HepG2 (cell line): ENCODE measurements at regions of chr1 and their contacts with region 1.

Region 1: DNA sequence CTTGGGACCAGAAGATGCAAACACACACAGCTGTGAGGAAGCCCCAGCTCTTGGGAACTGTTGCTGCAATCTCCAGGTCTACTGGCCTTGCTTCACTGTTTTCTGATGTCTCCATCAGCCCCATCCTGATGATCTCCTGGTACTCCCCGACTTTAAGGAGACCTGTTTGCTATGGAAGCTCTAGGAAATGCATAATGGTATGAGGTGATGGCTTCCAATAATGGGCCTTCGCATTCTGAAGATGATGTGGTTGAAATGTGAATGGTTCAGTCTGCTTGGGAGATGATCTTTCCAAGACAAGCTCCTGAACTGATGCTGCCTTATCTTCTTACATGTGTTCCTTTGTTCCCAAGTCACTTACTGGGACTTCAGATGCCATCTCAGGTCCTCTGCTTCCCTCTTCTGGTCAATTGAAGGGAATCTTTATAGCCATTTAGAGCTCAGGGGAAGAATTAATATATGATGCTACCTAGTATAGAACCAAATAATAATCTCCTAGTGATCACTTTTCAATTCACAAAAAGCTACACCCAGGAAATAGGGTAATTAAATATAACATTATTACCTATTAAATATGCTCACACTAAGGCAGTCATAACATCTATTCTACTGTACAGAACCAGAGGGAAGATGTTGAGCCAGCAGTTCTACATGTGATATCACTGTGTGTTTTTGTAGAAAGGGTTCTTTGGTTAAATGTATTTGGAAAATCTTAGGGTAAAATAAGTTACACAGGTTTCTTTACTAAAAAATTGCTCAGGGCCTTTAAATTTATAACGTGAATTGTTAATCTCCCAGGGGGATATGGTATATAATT is 73.9 kb upstream of the VTCN1 start:
- DNase-seq: peak; percentile 52
- ATAC-seq: peak; percentile 68
- H3K4me3 ChIP-seq: no peak overlapping the region
- H3K27ac ChIP-seq: no peak overlapping the region
- H3K4me1 ChIP-seq: no peaks in the 10 kb centered on the region
- H3K27me3 ChIP-seq: no peaks in the 10 kb centered on the region; a peak in 1 of 5 replicates
- CTCF ChIP-seq: peak; percentile 64
- EP300 ChIP-seq: no peak
- POLR2A ChIP-seq: no peak
- RAD21 ChIP-seq: no peak

Region 2: DNA sequence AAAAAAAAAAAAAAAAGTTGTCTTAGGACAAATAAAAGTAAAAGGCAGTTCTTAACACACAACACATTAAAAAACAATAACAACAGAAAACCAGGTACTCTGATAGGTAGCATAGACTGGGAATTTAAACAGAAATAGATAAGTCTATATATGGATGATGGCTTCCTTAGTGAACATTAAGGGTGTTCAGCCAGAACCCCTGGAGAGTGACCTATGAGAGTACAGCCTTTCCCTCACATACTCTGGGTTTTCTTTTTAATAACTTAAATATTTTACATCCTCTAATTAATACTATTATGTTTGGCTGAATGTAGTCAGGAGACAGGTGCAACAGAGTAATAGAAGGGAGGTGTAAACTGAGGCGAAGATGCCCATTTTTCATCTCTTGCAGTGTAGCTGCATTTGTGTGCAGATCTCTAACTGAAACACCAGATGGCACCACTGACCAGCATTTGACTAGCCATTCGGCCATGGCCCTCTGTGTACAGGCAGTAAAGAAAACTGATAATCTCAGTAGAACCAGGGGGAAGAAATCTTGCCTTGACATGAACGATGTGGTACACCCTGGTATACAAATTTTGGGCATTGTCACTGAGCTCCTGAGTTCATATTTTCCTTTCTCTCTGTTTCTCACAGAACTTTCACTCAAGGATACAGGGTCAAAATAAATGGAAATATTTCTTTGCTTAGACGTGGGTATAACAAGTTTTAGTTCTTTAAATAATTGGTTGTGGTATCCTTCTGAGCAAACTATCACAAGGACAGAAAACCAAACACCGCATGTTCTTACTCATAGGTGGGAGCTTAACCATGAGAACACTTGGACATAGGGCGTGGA is 216.9 kb before region 1 on chr1:
- CTCF ChIA-PET with region 1: interaction called, 21 read pairs
- POLR2A ChIA-PET with region 1: no interaction called
- in situ Hi-C with region 1: loop called (anchors 5 kb)
- intact Hi-C with region 1: loop called (anchors 1 kb)
- DNase-seq: peak; percentile 34
- ATAC-seq: peak; percentile 94
- H3K4me3 ChIP-seq: no peak overlapping the region
- H3K27ac ChIP-seq: no peak overlapping the region
- H3K4me1 ChIP-seq: no peaks in the 10 kb centered on the region
- H3K27me3 ChIP-seq: no peaks in the 10 kb centered on the region
- CTCF ChIP-seq: peak; percentile 88
- EP300 ChIP-seq: no peak
- POLR2A ChIP-seq: no peak
- RAD21 ChIP-seq: peak; percentile 65; the same call in 1 of the 2 replicates

Region 3: DNA sequence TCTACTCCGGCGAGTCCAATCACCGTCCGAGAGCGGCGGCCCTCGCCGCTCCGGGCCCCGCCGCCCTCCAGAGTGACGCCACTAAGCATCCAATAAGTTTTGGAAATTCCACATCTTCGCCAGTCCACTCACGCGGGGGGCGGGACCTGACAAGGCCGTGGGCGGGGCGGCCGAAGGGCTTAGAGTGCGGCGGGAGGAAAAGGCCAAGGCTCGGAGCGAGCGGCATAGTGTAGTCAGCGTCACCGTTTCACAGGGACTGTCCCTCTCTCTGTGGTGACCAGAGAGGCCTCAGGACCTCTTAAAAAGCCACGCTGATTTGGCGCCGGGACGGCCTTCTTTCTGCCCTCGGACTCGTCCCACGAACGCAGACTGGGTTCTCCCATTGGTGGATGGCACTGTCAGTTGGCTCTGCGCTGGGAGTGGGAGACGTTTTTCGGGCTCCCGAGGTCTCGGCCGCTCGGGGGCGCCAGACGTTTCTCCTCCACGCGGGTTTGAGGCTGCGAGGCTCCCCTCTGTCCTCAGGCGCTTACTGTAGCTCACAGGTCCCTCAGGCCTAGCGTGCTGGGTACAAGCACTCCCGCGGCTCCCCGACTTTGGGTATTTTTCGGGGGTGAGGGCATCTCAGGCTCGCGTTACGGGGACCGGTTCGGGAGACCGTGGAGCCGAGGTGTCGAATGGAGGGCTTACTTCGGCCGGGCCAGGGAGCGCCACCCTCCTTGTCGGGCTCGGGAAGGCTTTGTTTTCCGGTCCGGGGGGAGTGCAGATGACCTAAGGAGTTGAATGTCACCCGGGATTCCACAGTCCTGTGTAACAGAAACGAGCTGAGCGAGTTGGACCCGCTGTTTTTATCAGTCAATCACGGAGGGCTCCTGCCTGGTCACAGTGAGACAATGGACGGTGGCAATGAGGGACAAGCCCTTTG is 162.6 kb before region 1 on chr1:
- CTCF ChIA-PET with region 1: no interaction called
- POLR2A ChIA-PET with region 1: no interaction called
- in situ Hi-C with region 1: loop called (anchors 25 kb)
- intact Hi-C with region 1: loop called (anchors 2 kb)
- DNase-seq: peak; percentile 89
- ATAC-seq: peak; percentile 99
- H3K4me3 ChIP-seq: peak overlapping the region; percentile 47 to 77 (median 71); a peak in 5 of 6 replicates
- H3K27ac ChIP-seq: peak overlapping the region; percentile 43
- H3K4me1 ChIP-seq: peaks cover 19% of the 10 kb centered on the region
- H3K27me3 ChIP-seq: no peaks in the 10 kb centered on the region; a peak in 1 of 5 replicates
- CTCF ChIP-seq: peak; percentile 88
- EP300 ChIP-seq: no peak
- POLR2A ChIP-seq: peak; percentile 38 to 61; a peak in 3 of 4 replicates
- RAD21 ChIP-seq: peak; percentile 40; the same call in 1 of the 2 replicates

Region 4: GRCh38 chr1:117128323-117129079 is 156.1 kb before region 1 on chr1:
- CTCF ChIA-PET with region 1: no interaction called
- POLR2A ChIA-PET with region 1: no interaction called
- in situ Hi-C with region 1: loop called (anchors 25 kb)
- intact Hi-C with region 1: loop called (anchors 1 kb)
- DNase-seq: no peak
- ATAC-seq: no peak
- H3K4me3 ChIP-seq: no peak overlapping the region
- H3K27ac ChIP-seq: no peak overlapping the region
- H3K4me1 ChIP-seq: no peaks in the 10 kb centered on the region
- H3K27me3 ChIP-seq: no peaks in the 10 kb centered on the region
- CTCF ChIP-seq: peak; percentile 22
- EP300 ChIP-seq: no peak
- POLR2A ChIP-seq: no peak
- RAD21 ChIP-seq: no peak

Region 5: GRCh38 chr1:117339866-117340700 is 55.5 kb after region 1 on chr1:
- CTCF ChIA-PET with region 1: no interaction called
- POLR2A ChIA-PET with region 1: no interaction called
- in situ Hi-C with region 1: no loop called
- intact Hi-C with region 1: loop called (anchors 10 kb)
- DNase-seq: peak; percentile 39
- ATAC-seq: peak; percentile 76
- H3K4me3 ChIP-seq: no peak overlapping the region
- H3K27ac ChIP-seq: no peak overlapping the region
- H3K4me1 ChIP-seq: peaks cover 4% of the 10 kb centered on the region
- H3K27me3 ChIP-seq: peaks cover 0 to 5% of the 10 kb centered on the region in 2 experiments; a peak in 2 of 5 replicates
- CTCF ChIP-seq: peak; percentile 15; the same call in 1 of the 2 replicates
- EP300 ChIP-seq: no peak
- POLR2A ChIP-seq: no peak
- RAD21 ChIP-seq: no peak